HepG2 (cell line): ENCODE measurements at regions of chr13 and their contacts with region 1.

Region 1: DNA sequence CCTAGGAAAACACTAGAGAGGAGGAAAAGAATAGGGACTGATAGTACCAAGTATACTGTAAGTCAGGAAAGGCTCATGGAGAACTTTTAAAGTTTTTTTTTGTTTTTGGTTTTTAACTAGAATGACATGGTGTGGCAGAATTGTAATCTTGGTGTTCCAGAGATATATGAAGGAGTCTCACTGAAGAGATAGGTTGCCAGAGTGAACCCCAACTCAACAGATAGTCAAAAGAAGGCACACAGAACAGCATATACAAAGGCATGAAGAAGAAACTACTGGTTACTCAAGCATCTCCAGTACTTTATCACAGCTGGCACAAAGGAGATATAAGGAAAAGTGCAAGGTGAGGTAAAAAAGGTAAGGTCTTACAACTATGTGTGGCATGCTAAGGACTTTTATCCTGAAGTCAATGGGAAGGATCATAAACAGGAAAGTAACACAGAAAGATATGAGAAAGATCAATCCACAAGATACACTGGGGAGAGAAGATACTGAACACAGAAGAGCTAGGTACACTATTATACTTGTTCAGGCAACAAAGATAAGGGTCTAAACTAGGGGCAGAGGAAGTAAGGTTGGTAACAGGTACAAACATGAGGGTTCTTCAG is 6.0 kb downstream of the KPNA3 start:
- DNase-seq: no peak
- ATAC-seq: no peak
- H3K4me3 ChIP-seq: no peak overlapping the region
- H3K27ac ChIP-seq: no peak overlapping the region
- H3K4me1 ChIP-seq: peaks cover 80% of the 10 kb centered on the region
- H3K27me3 ChIP-seq: no peaks in the 10 kb centered on the region; a peak in 1 of 5 replicates
- CTCF ChIP-seq: no peak
- EP300 ChIP-seq: no peak
- POLR2A ChIP-seq: no peak
- RAD21 ChIP-seq: no peak

Region 2: DNA sequence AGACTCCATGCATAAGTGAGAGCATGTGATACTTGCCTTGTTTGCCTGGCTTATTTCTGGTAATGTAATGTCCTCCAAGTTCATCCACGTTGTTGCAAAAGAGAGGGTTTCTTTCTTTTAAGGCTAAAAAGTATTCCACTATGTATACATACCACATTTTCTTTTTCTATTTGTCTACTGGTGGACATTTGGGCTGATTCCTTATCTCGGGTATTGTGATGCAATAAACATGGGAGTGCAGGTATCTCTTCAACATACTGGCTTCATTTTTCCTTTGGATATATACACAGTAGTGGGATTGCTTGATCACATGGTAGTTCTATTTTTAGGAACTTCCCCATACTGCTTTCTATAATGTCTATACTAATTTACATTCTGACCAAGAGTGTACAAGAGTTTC is 45.6 kb before region 1 on chr13:
- CTCF ChIA-PET with region 1: no interaction called
- POLR2A ChIA-PET with region 1: interaction called, 5 read pairs
- in situ Hi-C with region 1: no loop called
- intact Hi-C with region 1: loop called (anchors 2 kb)
- DNase-seq: peak; percentile 74
- ATAC-seq: peak; percentile 76
- H3K4me3 ChIP-seq: no peak overlapping the region
- H3K27ac ChIP-seq: no peak overlapping the region
- H3K4me1 ChIP-seq: peaks cover 36% of the 10 kb centered on the region
- H3K27me3 ChIP-seq: no peaks in the 10 kb centered on the region
- CTCF ChIP-seq: no peak
- EP300 ChIP-seq: peak in 1 of 2 experiments; percentile 64; a peak in 1 of 4 replicates
- POLR2A ChIP-seq: no peak
- RAD21 ChIP-seq: no peak

Region 3: GRCh38 chr13:49985129-49985528 is 198.6 kb after region 1 on chr13:
- CTCF ChIA-PET with region 1: no interaction called
- POLR2A ChIA-PET with region 1: no interaction called
- in situ Hi-C with region 1: no loop called
- intact Hi-C with region 1: no loop called
- DNase-seq: no peak
- ATAC-seq: no peak
- H3K4me3 ChIP-seq: no peak overlapping the region
- H3K27ac ChIP-seq: no peak overlapping the region
- H3K4me1 ChIP-seq: no peaks in the 10 kb centered on the region
- H3K27me3 ChIP-seq: no peaks in the 10 kb centered on the region
- CTCF ChIP-seq: no peak
- EP300 ChIP-seq: no peak
- POLR2A ChIP-seq: no peak
- RAD21 ChIP-seq: no peak